ENCODE measurements at regions of chr3 and their contacts with region 1.

Region 1: GRCh38 chr3:62359531-62359930 is 13.8 kb downstream of the FEZF2 start:
- DNase-seq: no peak
- H3K4me3 ChIP-seq: no peak overlapping the region
- H3K27ac ChIP-seq: no peak overlapping the region
- H3K4me1 ChIP-seq: no peaks in the 10 kb centered on the region
- H3K27me3 ChIP-seq: no peaks in the 10 kb centered on the region
- CTCF ChIP-seq: no peak
- POLR2A ChIP-seq: no peak

Region 2: GRCh38 chr3:62101488-62101887 is 258.0 kb before region 1 on chr3:
- intact Hi-C with region 1: loop called (anchors 5 kb)
- DNase-seq: no peak
- H3K4me3 ChIP-seq: no peak overlapping the region
- H3K27ac ChIP-seq: no peak overlapping the region
- H3K4me1 ChIP-seq: no peaks in the 10 kb centered on the region
- H3K27me3 ChIP-seq: no peaks in the 10 kb centered on the region
- CTCF ChIP-seq: no peak
- POLR2A ChIP-seq: no peak